Activated B cell treated with CpG ODN at 0.5 μM for 24 hours (primary cell): ENCODE measurements at regions of chr11 and their contacts with region 1.

Region 1: DNA sequence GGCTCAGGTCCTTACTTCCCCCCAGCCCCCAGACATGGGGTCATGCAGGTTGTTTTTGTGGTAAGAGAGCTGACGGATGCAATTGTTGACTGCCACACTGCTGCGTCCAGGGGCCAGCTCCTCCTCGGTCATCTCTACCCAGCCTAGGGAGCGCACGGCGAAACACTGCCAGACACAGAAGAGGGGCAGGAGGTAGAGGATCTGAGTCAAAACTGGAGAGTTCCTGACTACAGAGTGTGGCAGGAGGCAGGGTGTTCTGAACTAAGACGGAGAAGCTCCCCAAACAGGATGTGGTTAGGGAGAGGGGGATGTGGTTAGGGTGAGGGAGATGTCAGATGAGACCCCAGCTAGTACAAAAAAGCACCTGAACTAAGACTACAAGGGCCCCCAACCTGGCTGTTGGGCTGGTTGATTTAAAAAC is 12.3 kb downstream of the SMPD1 start:
- DNase-seq: peak; percentile 30
- ATAC-seq: peak; percentile 90
- H3K4me3 Mint-ChIP-seq: peak overlapping the region; percentile 75
- H3K27ac Mint-ChIP-seq: peak overlapping the region; percentile 85
- H3K4me1 Mint-ChIP-seq: peaks cover 53% of the 10 kb centered on the region
- H3K27me3 Mint-ChIP-seq: no peaks in the 10 kb centered on the region
- CTCF ChIP-seq: no peak

Region 2: GRCh38 chr11:6258571-6259081 is 143.9 kb before region 1 on chr11:
- CTCF ChIA-PET with region 1: no interaction called
- POLR2A ChIA-PET with region 1: no interaction called
- intact Hi-C with region 1: no loop called
- DNase-seq: no peak
- ATAC-seq: no peak
- H3K4me3 Mint-ChIP-seq: no peak overlapping the region
- H3K27ac Mint-ChIP-seq: no peak overlapping the region
- H3K4me1 Mint-ChIP-seq: peaks cover 11% of the 10 kb centered on the region
- H3K27me3 Mint-ChIP-seq: peaks cover 14% of the 10 kb centered on the region
- CTCF ChIP-seq: no peak

Region 3: GRCh38 chr11:6419009-6419631 is 16.5 kb after region 1 on chr11 and contains the start of gene APBB1:
- CTCF ChIA-PET with region 1: no interaction called
- POLR2A ChIA-PET with region 1: interaction called, 20 read pairs
- intact Hi-C with region 1: loop called (anchors 2 kb)
- DNase-seq: peak; percentile 76
- ATAC-seq: peak; percentile 80
- H3K4me3 Mint-ChIP-seq: peak within 1 kb of the TSS; percentile 80
- H3K27ac Mint-ChIP-seq: peak within 1 kb of the TSS; percentile 71
- H3K4me1 Mint-ChIP-seq: peaks cover 4% of the 10 kb centered on the region
- H3K27me3 Mint-ChIP-seq: peaks cover 27% of the 10 kb centered on the region
- CTCF ChIP-seq: no peak
- total RNA-seq, gene APBB1: 20.6 and 22.1 TPM in 2 replicates

Region 4: GRCh38 chr11:6431861-6432260 is 29.3 kb after region 1 on chr11:
- CTCF ChIA-PET with region 1: no interaction called
- POLR2A ChIA-PET with region 1: no interaction called
- intact Hi-C with region 1: no loop called
- DNase-seq: no peak
- ATAC-seq: no peak
- H3K4me3 Mint-ChIP-seq: no peak overlapping the region
- H3K27ac Mint-ChIP-seq: no peak overlapping the region
- H3K4me1 Mint-ChIP-seq: peaks cover 3% of the 10 kb centered on the region
- H3K27me3 Mint-ChIP-seq: no peaks in the 10 kb centered on the region
- CTCF ChIP-seq: no peak

Region 5: GRCh38 chr11:6497069-6497839 is 94.7 kb after region 1 on chr11 and contains the start of gene DNHD1:
- CTCF ChIA-PET with region 1: no interaction called
- POLR2A ChIA-PET with region 1: no interaction called
- intact Hi-C with region 1: no loop called
- DNase-seq: no peak
- ATAC-seq: no peak
- H3K4me3 Mint-ChIP-seq: peak within 1 kb of the TSS; percentile 42
- H3K27ac Mint-ChIP-seq: no peak within 1 kb of the TSS
- H3K4me1 Mint-ChIP-seq: peaks cover 3% of the 10 kb centered on the region
- H3K27me3 Mint-ChIP-seq: no peaks in the 10 kb centered on the region
- CTCF ChIP-seq: no peak
- total RNA-seq, gene DNHD1: 26.7 and 42.6 TPM in 2 replicates